Lower leg skin (tissue), 4 donors: ENCODE measurements at regions of chr19 and their contacts with region 1.

Region 1: GRCh38 chr19:48835734-48836088 is 580 bp downstream of the HSD17B14 start:
- DNase-seq: peak; percentile 97 to 99
- H3K4me3 ChIP-seq: no peak overlapping the region
- CTCF ChIP-seq: peak in 1 of 3 donors; percentile 94
- POLR2A ChIP-seq: no peak

Region 2: GRCh38 chr19:48646001-48646721 is 189.6 kb before region 1 on chr19 and contains the start of gene CA11:
- intact Hi-C with region 1: loop called (anchors 10 kb)
- DNase-seq: peak in 1 of 2 donors; percentile 98
- H3K4me3 ChIP-seq: peak within 1 kb of the TSS; percentile 33
- CTCF ChIP-seq: peak in 1 of 3 donors; percentile 79
- POLR2A ChIP-seq: no peak
- total RNA-seq, gene CA11: 7.3 to 37.5 (median 10.3) TPM

Region 3: GRCh38 chr19:48795055-48795684 is 40.5 kb before region 1 on chr19:
- intact Hi-C with region 1: loop called (anchors 5 kb)
- DNase-seq: peak; percentile 93 to 97
- H3K4me3 ChIP-seq: no peak overlapping the region
- CTCF ChIP-seq: peak in 1 of 3 donors; percentile 92
- POLR2A ChIP-seq: no peak